Dendritic cell treated with granulocyte-macrophage colony-stimulating factor and Interleukin-4, amounts not matched to agents 40 ng/mL and 50 ng/mL, for 4 days (primary cell): ENCODE measurements at regions of chr22 and their contacts with region 1.

Region 1: GRCh38 chr22:49917974-49918910 is at the starts of genes ALG12 and CRELD2:
- H3K4me3 Mint-ChIP-seq: peak within 1 kb of the TSS; percentile 83
- H3K27ac Mint-ChIP-seq: peak within 1 kb of the TSS; percentile 90
- H3K4me1 Mint-ChIP-seq: peaks cover 29% of the 10 kb centered on the region
- H3K27me3 Mint-ChIP-seq: no peaks in the 10 kb centered on the region

Region 2: DNA sequence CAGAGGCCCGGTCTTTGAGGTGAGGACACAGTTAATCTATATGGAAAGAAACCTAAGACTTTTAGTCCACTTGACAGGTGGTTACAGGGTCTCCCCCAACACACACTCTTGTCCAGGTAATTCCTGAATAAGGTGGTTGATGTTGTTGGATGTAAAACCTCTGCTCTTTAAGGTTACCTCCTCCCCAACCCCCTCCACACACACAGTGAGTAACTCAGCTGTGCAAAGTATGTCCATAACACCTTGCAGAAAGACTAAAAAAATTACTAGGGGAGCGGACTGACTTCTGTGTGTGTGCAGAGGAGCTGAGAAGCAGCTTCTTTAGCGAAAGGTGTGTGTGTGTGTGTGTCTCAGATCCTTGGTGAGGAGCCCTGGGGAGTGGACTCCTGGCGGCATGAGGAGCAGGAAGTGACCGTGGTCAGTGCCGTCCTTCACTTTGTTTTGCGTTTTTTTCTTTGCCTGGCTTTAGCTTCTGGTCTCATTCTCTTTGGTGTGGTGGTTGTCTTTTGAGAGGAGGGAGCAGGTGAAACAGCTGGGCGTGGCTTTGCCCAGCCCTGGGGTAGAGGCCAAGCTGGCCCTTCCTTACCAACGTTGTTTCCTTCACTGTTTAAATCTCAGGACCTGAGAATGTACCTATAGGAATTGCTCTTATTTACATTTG is 62.9 kb before region 1 on chr22:
- intact Hi-C with region 1: loop called (anchors 5 kb)
- H3K4me3 Mint-ChIP-seq: peak overlapping the region; percentile 97
- H3K27ac Mint-ChIP-seq: peak overlapping the region; percentile 91
- H3K4me1 Mint-ChIP-seq: peaks cover 61% of the 10 kb centered on the region
- H3K27me3 Mint-ChIP-seq: peaks cover 10% of the 10 kb centered on the region

Region 3: GRCh38 chr22:49869845-49870712 is 48.2 kb before region 1 on chr22:
- intact Hi-C with region 1: no loop called
- H3K4me3 Mint-ChIP-seq: no peak overlapping the region
- H3K27ac Mint-ChIP-seq: no peak overlapping the region
- H3K4me1 Mint-ChIP-seq: peaks cover 15% of the 10 kb centered on the region
- H3K27me3 Mint-ChIP-seq: no peaks in the 10 kb centered on the region

Region 4: DNA sequence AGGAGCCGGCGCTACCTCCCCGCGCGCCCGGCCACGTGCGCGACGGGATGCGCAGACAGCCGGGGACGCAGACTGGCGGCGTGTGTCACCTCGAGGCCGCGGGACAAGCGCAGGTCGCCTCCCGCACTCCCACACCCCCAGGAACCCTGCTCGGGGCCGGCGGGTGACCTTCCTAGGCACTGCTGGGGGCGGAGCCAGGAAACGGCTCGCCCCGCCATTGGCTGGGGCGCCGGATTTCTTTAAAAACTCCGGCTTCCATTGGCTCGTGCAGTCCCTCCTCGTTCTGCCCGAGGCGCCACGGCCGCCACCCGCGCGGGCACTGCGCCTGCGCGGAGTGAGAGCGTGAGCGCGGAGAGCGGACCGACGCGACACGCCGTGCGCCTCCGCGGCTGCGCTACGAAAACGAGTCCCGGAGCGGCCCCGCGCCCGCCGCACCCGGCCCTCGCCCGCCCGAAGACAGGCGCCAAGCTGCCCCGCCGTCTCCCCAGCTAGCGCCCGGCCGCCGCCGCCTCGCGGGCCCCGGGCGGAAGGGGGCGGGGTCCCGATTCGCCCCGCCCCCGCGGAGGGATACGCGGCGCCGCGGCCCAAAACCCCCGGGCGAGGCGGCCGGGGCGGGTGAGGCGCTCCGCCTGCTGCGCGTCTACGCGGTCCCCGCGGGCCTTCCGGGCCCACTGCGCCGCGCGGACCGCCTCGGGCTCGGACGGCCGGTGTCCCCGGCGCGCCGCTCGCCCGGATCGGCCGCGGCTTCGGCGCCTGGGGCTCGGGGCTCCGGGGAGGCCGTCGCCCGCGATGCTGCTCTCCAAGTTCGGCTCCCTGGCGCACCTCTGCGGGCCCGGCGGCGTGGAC is 42.1 kb after region 1 on chr22 and contains the start of gene PIM3:
- intact Hi-C with region 1: no loop called
- H3K4me3 Mint-ChIP-seq: peak within 1 kb of the TSS; percentile 99
- H3K27ac Mint-ChIP-seq: peak within 1 kb of the TSS; percentile 97
- H3K4me1 Mint-ChIP-seq: peaks cover 67% of the 10 kb centered on the region
- H3K27me3 Mint-ChIP-seq: no peaks in the 10 kb centered on the region